ENCODE measurements at regions of chr1 and their contacts with region 1.

Region 1: DNA sequence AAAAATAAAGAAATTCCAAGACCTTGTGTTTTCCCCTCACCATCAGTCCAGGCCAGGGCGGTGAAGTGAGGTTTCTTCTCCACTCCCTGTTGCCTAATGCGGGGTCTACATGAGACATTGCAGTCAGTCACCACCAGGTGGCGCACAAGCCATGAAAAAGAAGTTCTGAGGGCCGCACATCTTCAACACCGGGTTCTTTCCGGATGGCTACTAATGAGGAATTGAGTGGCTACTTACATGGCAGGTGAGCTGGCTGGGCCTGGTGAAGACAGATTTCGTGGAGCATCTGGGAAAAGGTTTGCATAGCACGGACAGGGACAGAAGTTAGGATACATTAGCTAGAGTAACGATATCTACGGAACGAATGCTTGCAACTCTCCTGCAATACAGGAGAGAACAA is 15.8 kb upstream of the S100A11 start:
- DNase-seq: peak; percentile 85
- H3K4me3 ChIP-seq: no peak overlapping the region
- H3K27ac ChIP-seq: no peak overlapping the region
- H3K4me1 ChIP-seq: peaks cover 10% of the 10 kb centered on the region
- H3K27me3 ChIP-seq: peaks cover 48% of the 10 kb centered on the region
- CTCF ChIP-seq: peak; percentile 95

Region 2: GRCh38 chr1:151945725-151946364 is 106.8 kb before region 1 on chr1:
- CTCF ChIA-PET with region 1: no interaction called
- POLR2A ChIA-PET with region 1: no interaction called
- intact Hi-C with region 1: no loop called
- DNase-seq: peak; percentile 75
- H3K4me3 ChIP-seq: no peak overlapping the region
- H3K27ac ChIP-seq: no peak overlapping the region
- H3K4me1 ChIP-seq: no peaks in the 10 kb centered on the region
- H3K27me3 ChIP-seq: peaks cover 8% of the 10 kb centered on the region
- CTCF ChIP-seq: no peak

Region 3: DNA sequence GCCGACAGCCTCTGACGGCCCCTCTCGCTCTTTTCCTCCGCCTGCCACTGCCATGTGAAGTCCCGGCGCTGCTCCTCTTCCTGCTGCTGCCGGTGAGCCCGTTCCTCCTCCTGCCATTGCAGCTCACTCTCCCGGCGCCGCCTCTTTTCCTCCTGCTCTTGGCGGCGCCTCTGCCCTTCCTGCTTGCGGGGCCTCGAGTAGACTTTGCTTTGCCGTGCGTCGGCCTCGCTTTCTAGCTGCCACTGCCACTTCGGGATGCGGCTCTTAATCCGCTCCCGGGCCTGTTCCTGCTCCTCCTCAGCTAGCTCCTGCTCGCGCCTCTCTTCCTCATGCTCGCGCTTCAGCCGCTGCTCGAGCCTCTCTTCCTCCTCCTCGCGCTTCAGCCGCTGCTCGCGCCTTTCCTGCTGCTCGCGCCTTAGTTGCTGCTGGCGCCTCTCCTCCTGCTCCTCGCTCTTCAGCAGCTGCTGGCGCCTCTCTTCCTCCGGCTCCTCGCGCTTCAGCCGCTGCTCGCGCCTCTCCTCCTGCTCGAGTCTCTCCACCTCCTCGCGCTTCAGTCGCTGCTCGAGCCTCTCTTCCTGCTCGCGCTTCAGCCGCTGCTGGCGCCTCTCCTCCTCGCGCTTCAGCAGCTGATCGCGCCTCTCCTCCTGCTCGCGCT is 58.4 kb after region 1 on chr1:
- CTCF ChIA-PET with region 1: no interaction called
- POLR2A ChIA-PET with region 1: no interaction called
- intact Hi-C with region 1: loop called (anchors 5 kb)
- DNase-seq: peak; percentile 78
- H3K4me3 ChIP-seq: peak overlapping the region; percentile 42
- H3K27ac ChIP-seq: no peak overlapping the region
- H3K4me1 ChIP-seq: peaks cover 30% of the 10 kb centered on the region
- H3K27me3 ChIP-seq: peaks cover 98% of the 10 kb centered on the region
- CTCF ChIP-seq: no peak

Region 4: GRCh38 chr1:152347116-152347728 is 294.6 kb after region 1 on chr1:
- CTCF ChIA-PET with region 1: no interaction called
- POLR2A ChIA-PET with region 1: no interaction called
- intact Hi-C with region 1: loop called (anchors 2 kb)
- DNase-seq: peak; percentile 71
- H3K4me3 ChIP-seq: no peak overlapping the region
- H3K27ac ChIP-seq: no peak overlapping the region
- H3K4me1 ChIP-seq: no peaks in the 10 kb centered on the region
- H3K27me3 ChIP-seq: peaks cover 5% of the 10 kb centered on the region
- CTCF ChIP-seq: peak; percentile 89

Measured in A673 (cell line).